ENCODE measurements at regions of chr22 and their contacts with region 1.

Region 1: GRCh38 chr22:20079745-20080444 is at the start of gene DGCR8:
- DNase-seq: peak; percentile 96

Region 2: GRCh38 chr22:20066617-20067383 is 13.1 kb before region 1 on chr22:
- CTCF ChIA-PET with region 1: interaction called, 3 read pairs
- POLR2A ChIA-PET with region 1: interaction called, 22 read pairs
- DNase-seq: no peak

Region 3: DNA sequence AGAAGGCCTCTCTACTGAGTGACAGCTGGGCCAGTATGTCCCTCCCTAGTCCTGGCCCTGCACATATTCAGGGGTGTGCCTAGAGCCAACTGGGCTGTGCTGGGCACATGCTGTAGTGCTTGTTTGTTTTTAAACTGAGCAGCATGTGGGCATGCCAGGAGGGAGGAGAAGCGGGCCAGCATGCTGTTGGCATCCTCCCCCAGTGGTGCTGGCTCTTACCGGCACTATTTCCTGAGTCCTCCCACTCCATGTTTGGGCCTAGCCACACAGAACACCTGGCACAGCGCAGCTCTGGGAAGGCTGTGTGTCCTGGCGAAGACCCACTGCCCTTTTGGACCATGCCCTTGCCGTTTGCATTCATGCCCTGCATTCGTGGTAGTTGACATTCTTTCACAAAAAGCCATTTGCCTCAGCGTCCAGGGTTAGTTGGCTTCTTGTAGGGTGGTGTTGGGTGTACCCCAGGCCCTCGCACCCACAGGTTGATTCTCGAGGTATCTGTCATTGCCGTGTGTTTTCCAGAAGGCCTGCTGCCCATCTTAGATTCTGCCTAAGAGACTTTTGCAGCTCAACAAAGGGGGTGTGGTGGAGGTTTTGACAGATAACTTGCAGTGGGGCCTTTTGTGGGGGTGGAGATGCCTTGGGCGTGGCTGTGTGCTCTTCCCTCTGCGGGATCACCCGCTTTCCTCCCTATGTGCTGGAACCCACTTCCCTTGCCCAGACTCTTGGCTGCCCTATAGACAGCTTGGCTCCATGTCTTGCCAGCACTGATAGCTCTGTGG is 13.7 kb after region 1 on chr22:
- CTCF ChIA-PET with region 1: no interaction called
- POLR2A ChIA-PET with region 1: interaction called, 13 read pairs
- DNase-seq: no peak

Region 4: DNA sequence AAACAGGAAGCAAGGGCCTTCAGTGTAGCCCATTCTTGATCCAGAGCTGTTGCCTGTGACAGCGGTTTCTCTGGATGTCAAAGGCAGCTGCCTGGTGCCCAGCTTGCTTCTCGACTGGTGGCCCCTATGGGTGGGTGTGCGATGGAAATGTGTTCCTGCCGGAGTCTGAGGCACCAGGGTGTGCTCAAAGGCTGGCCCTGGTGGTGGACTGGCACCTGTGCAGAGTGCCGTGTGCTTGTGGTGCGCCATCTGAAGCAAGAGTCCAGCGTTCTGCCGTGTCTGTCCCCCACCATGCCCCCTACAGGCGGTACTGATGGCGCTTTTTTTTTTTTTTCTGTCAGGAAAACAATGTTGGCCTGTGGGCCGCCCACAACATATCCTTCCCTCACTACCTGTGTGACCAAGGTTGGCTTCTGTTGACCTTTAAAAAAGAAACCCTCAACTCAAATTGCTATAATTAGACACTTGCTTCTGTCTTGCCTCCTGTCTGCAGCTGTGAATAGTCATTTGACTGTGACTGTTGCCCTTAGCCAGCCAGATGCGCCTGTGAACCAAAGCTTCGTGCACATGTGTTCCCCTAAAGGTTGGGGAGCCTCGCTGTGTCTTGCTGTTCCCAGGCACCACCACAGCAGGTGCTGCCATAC is 31.3 kb after region 1 on chr22:
- CTCF ChIA-PET with region 1: interaction called, 4 read pairs
- POLR2A ChIA-PET with region 1: interaction called, 22 read pairs
- DNase-seq: peak; percentile 75

Region 5: GRCh38 chr22:20116951-20117645 is 37.2 kb after region 1 on chr22 and contains the start of gene TRMT2A:
- CTCF ChIA-PET with region 1: no interaction called
- POLR2A ChIA-PET with region 1: interaction called, 22 read pairs
- DNase-seq: peak; percentile 99

Region 6: DNA sequence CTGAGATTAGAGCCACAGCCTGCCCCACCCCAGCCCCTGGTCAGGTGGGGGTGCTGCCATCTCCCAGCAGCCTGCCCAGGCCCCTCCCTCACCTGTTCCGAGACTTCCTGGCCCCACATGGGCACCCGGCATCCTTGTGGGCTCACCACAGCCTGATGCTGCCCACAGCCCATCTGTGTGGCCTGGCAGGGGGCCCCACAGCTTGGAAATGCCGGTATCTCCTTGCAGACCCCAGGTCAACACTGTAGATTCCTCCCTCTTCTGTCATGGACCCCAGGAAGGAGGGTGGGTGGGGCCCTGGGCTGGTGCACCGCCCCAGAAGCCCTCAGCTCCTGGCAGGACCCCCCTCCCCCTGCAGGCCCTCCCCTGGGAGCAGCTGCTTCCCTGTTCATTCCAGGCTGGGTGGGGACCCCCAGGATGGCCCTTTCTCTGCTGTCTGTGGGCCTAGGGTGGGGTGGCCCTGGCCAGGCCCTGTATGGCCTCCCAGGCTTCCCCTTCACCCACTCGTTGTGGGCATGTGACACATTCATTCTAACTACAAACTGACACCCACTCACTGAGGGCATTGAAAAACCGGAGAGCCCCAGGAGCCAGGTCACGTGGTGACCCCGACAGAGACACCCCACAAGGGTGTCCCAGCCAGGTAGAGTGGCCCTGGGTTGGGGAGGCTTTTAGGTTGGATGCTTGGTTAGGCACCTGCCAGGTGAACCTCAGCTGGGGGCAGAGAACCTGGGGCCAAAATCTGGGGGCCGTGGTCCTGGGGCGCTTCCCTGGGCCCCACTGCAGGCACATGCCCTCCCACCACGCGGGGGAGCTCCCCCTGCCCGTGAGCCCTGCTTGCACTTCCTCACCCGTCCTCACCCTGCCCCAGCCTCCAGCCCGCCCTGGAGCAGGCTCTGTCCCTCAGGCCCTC is 115.0 kb after region 1 on chr22:
- CTCF ChIA-PET with region 1: no interaction called
- POLR2A ChIA-PET with region 1: no interaction called
- DNase-seq: no peak